ENCODE measurements at regions of chr12 and their contacts with region 1.

Region 1: GRCh38 chr12:45215419-45216229 is at the start of gene ANO6:
- DNase-seq: peak; percentile 93 to 94
- H3K4me3 ChIP-seq: peak within 1 kb of the TSS; percentile 70
- H3K4me3 Mint-ChIP-seq: peak within 1 kb of the TSS; percentile 96
- H3K27ac Mint-ChIP-seq: peak within 1 kb of the TSS; percentile 84
- H3K4me1 ChIP-seq: peaks cover 22% of the 10 kb centered on the region
- H3K4me1 Mint-ChIP-seq: peaks cover 24% of the 10 kb centered on the region
- H3K27me3 ChIP-seq: no peaks in the 10 kb centered on the region
- H3K27me3 Mint-ChIP-seq: no peaks in the 10 kb centered on the region
- CTCF ChIP-seq: peak in 1 of 2 experiments; percentile 70
- total RNA-seq, gene ANO6: 116 and 126 TPM in 2 replicates

Region 2: GRCh38 chr12:45148006-45148405 is 67.6 kb before region 1 on chr12:
- CTCF ChIA-PET with region 1: no interaction called
- POLR2A ChIA-PET with region 1: no interaction called
- intact Hi-C with region 1: no loop called
- DNase-seq: no peak
- H3K4me3 ChIP-seq: no peak overlapping the region
- H3K4me3 Mint-ChIP-seq: no peak overlapping the region
- H3K27ac Mint-ChIP-seq: no peak overlapping the region
- H3K4me1 ChIP-seq: no peaks in the 10 kb centered on the region
- H3K4me1 Mint-ChIP-seq: no peaks in the 10 kb centered on the region
- H3K27me3 ChIP-seq: no peaks in the 10 kb centered on the region
- H3K27me3 Mint-ChIP-seq: no peaks in the 10 kb centered on the region
- CTCF ChIP-seq: no peak

Region 3: GRCh38 chr12:45183246-45183645 is 32.4 kb before region 1 on chr12:
- CTCF ChIA-PET with region 1: no interaction called
- POLR2A ChIA-PET with region 1: no interaction called
- intact Hi-C with region 1: loop called (anchors 5 kb)
- DNase-seq: no peak
- H3K4me3 ChIP-seq: no peak overlapping the region
- H3K4me3 Mint-ChIP-seq: no peak overlapping the region
- H3K27ac Mint-ChIP-seq: no peak overlapping the region
- H3K4me1 ChIP-seq: peaks cover 21% of the 10 kb centered on the region
- H3K4me1 Mint-ChIP-seq: peaks cover 15% of the 10 kb centered on the region
- H3K27me3 ChIP-seq: no peaks in the 10 kb centered on the region
- H3K27me3 Mint-ChIP-seq: no peaks in the 10 kb centered on the region
- CTCF ChIP-seq: peak; percentile 41 to 53

Region 4: GRCh38 chr12:45191239-45191638 is 24.4 kb before region 1 on chr12:
- CTCF ChIA-PET with region 1: interaction called, 8 read pairs
- POLR2A ChIA-PET with region 1: interaction called, 6 read pairs
- intact Hi-C with region 1: loop called (anchors 1 kb)
- DNase-seq: no peak
- H3K4me3 ChIP-seq: no peak overlapping the region
- H3K4me3 Mint-ChIP-seq: no peak overlapping the region
- H3K27ac Mint-ChIP-seq: peak overlapping the region; percentile 95
- H3K4me1 ChIP-seq: peaks cover 57% of the 10 kb centered on the region
- H3K4me1 Mint-ChIP-seq: peaks cover 44% of the 10 kb centered on the region
- H3K27me3 ChIP-seq: no peaks in the 10 kb centered on the region
- H3K27me3 Mint-ChIP-seq: no peaks in the 10 kb centered on the region
- CTCF ChIP-seq: no peak

Region 5: DNA sequence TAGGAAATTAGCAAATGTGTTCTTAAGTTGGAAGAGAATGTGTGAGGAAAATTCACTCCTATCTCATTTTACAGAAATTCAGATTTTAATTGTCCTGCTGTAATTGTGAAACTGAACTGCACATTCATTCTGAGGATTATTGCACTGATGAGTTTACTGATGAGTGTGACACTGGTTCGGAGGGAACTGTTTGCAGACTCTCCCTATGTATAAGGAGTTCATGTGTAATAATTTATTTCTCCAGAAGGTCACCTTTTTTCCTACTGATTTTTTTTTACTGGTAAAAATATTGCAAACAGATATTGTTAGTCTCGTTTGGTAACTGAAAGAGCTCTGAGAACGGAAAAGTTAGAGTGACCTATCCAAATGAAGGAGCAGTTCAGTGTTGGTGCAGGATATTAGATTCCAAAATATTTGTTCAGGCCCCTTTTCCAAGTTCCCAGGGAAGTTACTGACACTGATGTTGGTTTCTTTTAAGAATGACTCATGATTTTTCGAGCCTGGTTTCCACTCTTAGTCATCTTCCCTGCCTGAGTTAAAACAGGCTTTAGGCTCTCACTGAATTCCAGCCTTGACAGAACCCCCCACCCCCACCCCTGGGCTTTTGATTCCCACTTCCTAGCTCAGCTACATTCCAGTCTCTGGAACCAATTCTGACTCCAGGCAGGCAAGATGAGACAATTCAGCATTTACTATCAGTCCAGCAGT is 18.7 kb after region 1 on chr12:
- CTCF ChIA-PET with region 1: interaction called, 3 read pairs
- POLR2A ChIA-PET with region 1: interaction called, 10 read pairs
- intact Hi-C with region 1: no loop called
- DNase-seq: peak; percentile 47 to 55
- H3K4me3 ChIP-seq: no peak overlapping the region
- H3K4me3 Mint-ChIP-seq: peak overlapping the region; percentile 27
- H3K27ac Mint-ChIP-seq: peak overlapping the region; percentile 77
- H3K4me1 ChIP-seq: peaks cover 59% of the 10 kb centered on the region
- H3K4me1 Mint-ChIP-seq: peaks cover 53% of the 10 kb centered on the region
- H3K27me3 ChIP-seq: no peaks in the 10 kb centered on the region
- H3K27me3 Mint-ChIP-seq: no peaks in the 10 kb centered on the region
- CTCF ChIP-seq: no peak

Region 6: GRCh38 chr12:45343269-45344051 is 127.8 kb after region 1 on chr12:
- CTCF ChIA-PET with region 1: no interaction called
- POLR2A ChIA-PET with region 1: no interaction called
- intact Hi-C with region 1: loop called (anchors 2 kb)
- DNase-seq: peak; percentile 47 to 53
- H3K4me3 ChIP-seq: no peak overlapping the region
- H3K4me3 Mint-ChIP-seq: peak overlapping the region; percentile 8
- H3K27ac Mint-ChIP-seq: peak overlapping the region; percentile 45
- H3K4me1 ChIP-seq: peaks cover 28% of the 10 kb centered on the region
- H3K4me1 Mint-ChIP-seq: peaks cover 21% of the 10 kb centered on the region
- H3K27me3 ChIP-seq: no peaks in the 10 kb centered on the region
- H3K27me3 Mint-ChIP-seq: no peaks in the 10 kb centered on the region
- CTCF ChIP-seq: no peak

Measured in Caco-2 (cell line).